ENCODE measurements at regions of chr4 and their contacts with region 1.

Region 1: GRCh38 chr4:26141911-26142638 is 178.7 kb upstream of the RBPJ start:
- DNase-seq: peak; percentile 90
- H3K4me3 ChIP-seq: no peak overlapping the region
- H3K27ac ChIP-seq: peak overlapping the region; percentile 49 to 87 (median 82)
- H3K4me1 ChIP-seq: peaks cover 0 to 57% (median 48%) of the 10 kb centered on the region in 4 donors
- H3K27me3 ChIP-seq: no peaks in the 10 kb centered on the region
- CTCF ChIP-seq: no peak
- EP300 ChIP-seq: peak; percentile 79 to 99 (median 94)
- POLR2A ChIP-seq: no peak

Region 2: GRCh38 chr4:26050212-26050643 is 91.8 kb before region 1 on chr4:
- intact Hi-C with region 1: loop called (anchors 5 kb)
- DNase-seq: peak; percentile 77
- H3K4me3 ChIP-seq: no peak overlapping the region
- H3K27ac ChIP-seq: peak overlapping the region; percentile 80 to 86 (median 83)
- H3K4me1 ChIP-seq: peaks cover 0 to 41% (median 39%) of the 10 kb centered on the region in 4 donors
- H3K27me3 ChIP-seq: no peaks in the 10 kb centered on the region
- CTCF ChIP-seq: no peak
- EP300 ChIP-seq: no peak
- POLR2A ChIP-seq: no peak

Region 3: DNA sequence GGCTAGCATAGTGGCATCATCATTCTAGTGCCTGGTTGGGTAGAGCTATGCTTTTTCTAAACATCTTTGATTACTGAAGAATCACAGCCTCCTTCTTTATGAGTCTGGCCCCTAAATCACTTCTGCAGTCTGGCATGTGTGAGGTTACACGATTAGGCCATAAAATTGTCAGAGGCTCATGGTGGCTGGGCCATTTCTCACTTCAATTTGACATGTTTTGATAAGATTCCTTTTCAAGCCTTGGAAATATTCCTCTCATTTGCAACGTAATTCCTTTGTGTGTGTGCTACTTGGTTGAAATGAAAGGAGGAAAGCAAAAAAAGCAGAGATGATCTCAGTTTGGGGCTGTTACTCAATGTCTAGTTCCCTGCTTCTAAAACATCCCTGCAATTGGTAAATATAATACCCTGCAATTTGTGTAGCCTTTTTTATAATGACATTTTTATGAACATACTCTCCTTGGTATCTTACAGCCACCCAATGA is 342.0 kb after region 1 on chr4:
- intact Hi-C with region 1: loop called (anchors 5 kb)
- DNase-seq: peak; percentile 72
- H3K4me3 ChIP-seq: no peak overlapping the region
- H3K27ac ChIP-seq: peak overlapping the region in 3 of 4 donors; percentile 46 to 83 (median 80)
- H3K4me1 ChIP-seq: peaks cover 0 to 60% (median 32%) of the 10 kb centered on the region in 4 donors
- H3K27me3 ChIP-seq: no peaks in the 10 kb centered on the region
- CTCF ChIP-seq: no peak
- EP300 ChIP-seq: peak; percentile 72 to 92 (median 79)
- POLR2A ChIP-seq: no peak